PC-3 (cell line): ENCODE measurements at regions of chr21 and their contacts with region 1.

Region 1: GRCh38 chr21:25845729-25846256 is 111.0 kb downstream of the GABPA start:
- DNase-seq: no peak
- ATAC-seq: peak; percentile 33; the same call in 1 of the 2 replicates
- H3K4me3 ChIP-seq: no peak overlapping the region
- H3K27ac ChIP-seq: no peak overlapping the region
- H3K4me1 ChIP-seq: no peaks in the 10 kb centered on the region
- H3K27me3 ChIP-seq: peaks cover 11% of the 10 kb centered on the region; the same call in 1 of the 2 replicates
- CTCF ChIP-seq: no peak

Region 2: GRCh38 chr21:25809013-25809412 is 36.8 kb before region 1 on chr21:
- CTCF ChIA-PET with region 1: no interaction called
- POLR2A ChIA-PET with region 1: no interaction called
- intact Hi-C with region 1: loop called (anchors 5 kb)
- DNase-seq: peak; percentile 86
- ATAC-seq: peak; percentile 96
- H3K4me3 ChIP-seq: no peak overlapping the region
- H3K27ac ChIP-seq: peak overlapping the region; percentile 62
- H3K4me1 ChIP-seq: peaks cover 27% of the 10 kb centered on the region
- H3K27me3 ChIP-seq: no peaks in the 10 kb centered on the region
- CTCF ChIP-seq: no peak

Region 3: GRCh38 chr21:26599261-26599660 is 753.5 kb after region 1 on chr21:
- CTCF ChIA-PET with region 1: no interaction called
- POLR2A ChIA-PET with region 1: interaction called, 17 read pairs
- intact Hi-C with region 1: no loop called
- DNase-seq: no peak
- ATAC-seq: no peak
- H3K4me3 ChIP-seq: no peak overlapping the region
- H3K27ac ChIP-seq: no peak overlapping the region
- H3K4me1 ChIP-seq: no peaks in the 10 kb centered on the region
- H3K27me3 ChIP-seq: no peaks in the 10 kb centered on the region
- CTCF ChIP-seq: no peak